ENCODE measurements at regions of chr4 and their contacts with region 1.

Region 1: GRCh38 chr4:112664611-112665010 is 27.7 kb downstream of the LARP7 start:
- DNase-seq: no peak
- H3K4me3 ChIP-seq: no peak overlapping the region
- H3K27ac ChIP-seq: no peak overlapping the region
- H3K4me1 ChIP-seq: no peaks in the 10 kb centered on the region
- CTCF ChIP-seq: no peak

Region 2: GRCh38 chr4:112245383-112245782 is 419.2 kb before region 1 on chr4:
- CTCF ChIA-PET with region 1: no interaction called
- POLR2A ChIA-PET with region 1: interaction called, 11 read pairs
- intact Hi-C with region 1: no loop called
- DNase-seq: no peak
- H3K4me3 ChIP-seq: no peak overlapping the region
- H3K27ac ChIP-seq: no peak overlapping the region
- H3K4me1 ChIP-seq: no peaks in the 10 kb centered on the region
- CTCF ChIP-seq: 0 out of 2 replicates have a peak, but pooled peaks have one; percentile 22

Region 3: GRCh38 chr4:112361181-112361791 is 303.3 kb before region 1 on chr4:
- CTCF ChIA-PET with region 1: no interaction called
- POLR2A ChIA-PET with region 1: no interaction called
- intact Hi-C with region 1: no loop called
- DNase-seq: peak; percentile 61
- H3K4me3 ChIP-seq: peak overlapping the region; percentile 26
- H3K27ac ChIP-seq: peak overlapping the region; percentile 19
- H3K4me1 ChIP-seq: peaks cover 12% of the 10 kb centered on the region
- CTCF ChIP-seq: peak; percentile 28; the same call in 1 of the 2 replicates

Region 4: DNA sequence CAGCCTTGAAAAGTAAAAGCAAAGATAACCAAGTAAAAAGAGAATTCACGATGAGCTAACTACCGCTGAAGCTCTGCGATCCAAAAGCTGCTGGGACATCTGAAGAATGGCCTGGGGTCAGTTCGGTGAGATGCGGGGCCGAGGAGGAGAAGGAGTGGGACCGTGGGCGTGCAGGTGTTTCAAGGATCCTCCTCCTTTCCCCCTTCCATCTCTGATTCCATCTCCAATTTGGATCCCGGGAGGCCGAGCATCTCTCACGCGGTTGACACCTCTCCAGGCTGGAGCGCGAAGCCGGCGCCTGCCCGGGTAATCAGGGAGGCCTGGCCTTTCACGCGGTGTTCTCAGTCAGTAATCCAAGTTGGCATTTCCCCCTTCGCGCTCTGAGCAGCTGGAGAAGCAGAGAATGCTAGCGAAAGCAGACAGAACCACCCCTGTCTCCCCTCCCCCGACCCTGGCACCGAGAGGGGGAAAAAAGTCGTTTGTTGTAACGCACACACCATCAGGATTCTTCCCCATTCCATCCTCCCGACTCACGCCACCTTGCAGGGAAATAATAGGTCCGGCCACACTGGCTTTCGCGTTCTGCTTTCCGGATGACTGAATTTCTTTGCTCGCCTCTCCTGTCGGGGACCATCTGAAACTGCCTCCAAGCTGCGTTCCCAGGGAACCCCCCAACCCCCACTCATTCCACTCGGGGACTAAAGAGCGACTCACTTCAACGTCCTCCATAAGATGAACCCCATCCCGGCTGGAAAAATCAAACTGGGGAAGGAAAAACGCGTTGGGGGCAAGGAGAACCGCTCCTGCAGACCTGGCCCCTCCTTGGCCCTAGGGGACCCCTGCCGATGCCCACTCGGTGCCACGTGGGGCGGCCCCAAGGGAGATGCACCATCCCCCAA is 155.1 kb before region 1 on chr4:
- CTCF ChIA-PET with region 1: no interaction called
- POLR2A ChIA-PET with region 1: no interaction called
- intact Hi-C with region 1: no loop called
- DNase-seq: no peak
- H3K4me3 ChIP-seq: no peak overlapping the region
- H3K27ac ChIP-seq: no peak overlapping the region
- H3K4me1 ChIP-seq: peaks cover 4% of the 10 kb centered on the region
- CTCF ChIP-seq: no peak

Measured in OCI-LY7 (cell line).